ENCODE measurements at regions of chr7 and their contacts with region 1.

Region 1: GRCh38 chr7:139777948-139778841 is at the start of gene HIPK2:
- DNase-seq: peak in 1 of 2 experiments; percentile 64
- H3K4me3 ChIP-seq: peak within 1 kb of the TSS; percentile 90
- H3K27ac ChIP-seq: peak within 1 kb of the TSS; percentile 45
- H3K4me1 ChIP-seq: peaks cover 39% of the 10 kb centered on the region
- H3K27me3 ChIP-seq: no peaks in the 10 kb centered on the region
- CTCF ChIP-seq: no peak
- total RNA-seq, gene HIPK2: 23.9 and 35.2 TPM in 2 replicates

Region 2: DNA sequence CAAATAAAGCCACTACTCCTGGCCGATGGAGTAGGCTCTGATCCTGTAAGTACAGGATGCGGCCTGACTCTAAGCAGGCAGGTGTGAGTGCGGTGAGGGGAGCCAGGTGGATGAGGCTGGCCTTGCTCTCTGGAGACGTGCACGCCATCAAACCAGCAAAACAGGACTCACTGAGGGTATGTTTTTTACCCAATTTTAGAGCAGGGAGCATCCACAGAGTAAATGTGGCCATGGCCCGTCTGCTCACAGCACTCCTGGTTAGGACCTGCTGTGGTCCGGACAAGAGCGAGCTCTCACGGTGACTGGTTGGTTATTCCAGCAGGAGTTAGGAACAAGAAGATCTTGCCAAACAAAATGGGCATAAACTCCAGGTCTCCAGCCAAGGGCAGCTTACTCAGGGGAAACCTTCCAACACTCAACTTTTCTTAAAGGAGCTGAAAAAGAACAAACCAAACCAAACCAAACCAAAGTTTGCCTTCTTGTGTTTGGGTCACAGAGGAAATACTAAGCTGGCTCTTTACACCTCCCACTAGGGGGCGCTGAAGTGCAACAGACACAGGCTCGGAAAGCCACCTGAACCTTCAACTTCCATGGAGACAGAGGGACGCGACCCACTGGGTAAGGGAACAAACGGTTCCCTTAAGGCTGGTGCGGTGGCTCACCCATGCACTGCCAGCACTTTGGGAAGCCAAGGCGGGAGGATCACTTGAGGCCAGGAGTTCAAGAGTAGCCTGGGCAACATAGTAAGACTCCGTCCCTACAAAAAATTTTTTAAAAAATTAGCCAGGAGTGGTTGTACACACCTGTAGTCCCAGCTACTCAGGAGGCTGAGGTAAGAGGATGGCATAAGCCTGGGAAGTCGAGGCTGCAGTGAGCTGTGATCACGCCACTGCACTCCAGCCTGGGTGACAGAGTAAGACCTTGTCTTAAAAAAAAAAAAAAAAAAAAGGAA is 132.3 kb before region 1 on chr7:
- CTCF ChIA-PET with region 1: interaction called, 4 read pairs
- POLR2A ChIA-PET with region 1: no interaction called
- intact Hi-C with region 1: loop called (anchors 1 kb)
- DNase-seq: peak; percentile 56 to 73
- H3K4me3 ChIP-seq: no peak overlapping the region
- H3K27ac ChIP-seq: no peak overlapping the region
- H3K4me1 ChIP-seq: no peaks in the 10 kb centered on the region
- H3K27me3 ChIP-seq: no peaks in the 10 kb centered on the region
- CTCF ChIP-seq: peak; percentile 98

Region 3: GRCh38 chr7:139915864-139916716 is 137.9 kb after region 1 on chr7:
- CTCF ChIA-PET with region 1: interaction called, 4 read pairs
- POLR2A ChIA-PET with region 1: no interaction called
- intact Hi-C with region 1: loop called (anchors 1 kb)
- DNase-seq: peak; percentile 75 to 98
- H3K4me3 ChIP-seq: peak overlapping the region; percentile 1; the same call in 1 of the 2 replicates
- H3K27ac ChIP-seq: peak overlapping the region; percentile 95
- H3K4me1 ChIP-seq: peaks cover 46% of the 10 kb centered on the region
- H3K27me3 ChIP-seq: no peaks in the 10 kb centered on the region
- CTCF ChIP-seq: no peak

Region 4: DNA sequence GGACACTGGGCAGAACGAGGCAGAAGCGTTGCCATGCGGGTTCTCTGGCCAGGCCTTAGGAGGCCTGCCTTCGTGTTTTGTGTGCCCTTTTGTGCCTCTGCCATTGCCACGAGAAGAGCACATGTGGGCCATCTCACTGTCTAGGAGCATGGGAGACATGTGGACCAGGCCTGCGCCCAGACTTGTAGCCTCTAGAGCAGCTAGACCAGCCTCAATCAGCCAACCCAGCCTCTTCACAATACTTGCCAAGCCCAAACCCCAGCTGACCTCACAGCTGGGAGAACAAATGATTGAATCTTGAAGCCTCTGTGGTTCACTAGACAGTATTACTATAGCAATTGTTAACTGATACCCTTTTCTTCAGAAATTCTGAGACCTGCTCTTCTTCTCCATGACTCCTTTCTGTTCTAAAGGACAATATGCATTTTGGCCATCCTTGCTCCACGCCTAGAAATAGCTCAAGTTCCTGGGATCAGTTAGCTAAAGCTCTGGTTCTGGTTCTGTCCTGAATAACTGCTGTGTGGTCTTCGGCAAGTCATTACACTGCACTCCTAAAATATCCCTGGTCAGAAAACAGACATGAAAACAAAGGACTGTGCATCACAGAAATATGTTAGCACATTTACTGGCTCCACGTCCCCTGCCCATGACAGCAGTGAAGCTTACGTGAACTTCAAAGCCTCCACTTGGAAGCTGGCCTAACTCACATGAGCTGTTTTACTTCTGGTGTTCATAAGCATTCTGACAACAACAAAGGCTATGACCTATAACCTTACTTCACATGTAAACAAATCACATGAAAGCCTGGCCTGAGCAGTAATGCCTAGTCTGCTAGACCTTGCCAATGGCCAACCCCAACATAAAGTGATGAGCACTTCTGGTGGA is 773.4 kb after region 1 on chr7:
- CTCF ChIA-PET with region 1: no interaction called
- POLR2A ChIA-PET with region 1: no interaction called
- intact Hi-C with region 1: no loop called
- DNase-seq: no peak
- H3K4me3 ChIP-seq: no peak overlapping the region
- H3K27ac ChIP-seq: no peak overlapping the region
- H3K4me1 ChIP-seq: no peaks in the 10 kb centered on the region
- H3K27me3 ChIP-seq: no peaks in the 10 kb centered on the region
- CTCF ChIP-seq: no peak

Measured in PC-9 (cell line).